ENCODE measurements at regions of chr6 and their contacts with region 1.

Region 1: GRCh38 chr6:51350308-51350904 is 531.7 kb downstream of the TFAP2B start:
- DNase-seq: no peak
- H3K4me3 Mint-ChIP-seq: no peak overlapping the region
- H3K27ac Mint-ChIP-seq: no peak overlapping the region
- H3K4me1 Mint-ChIP-seq: no peaks in the 10 kb centered on the region
- H3K27me3 Mint-ChIP-seq: peaks cover 23% of the 10 kb centered on the region
- CTCF ChIP-seq: peak; percentile 27

Region 2: GRCh38 chr6:51077821-51078518 is 272.4 kb before region 1 on chr6:
- CTCF ChIA-PET with region 1: no interaction called
- intact Hi-C with region 1: loop called (anchors 5 kb)
- DNase-seq: no peak
- H3K4me3 Mint-ChIP-seq: no peak overlapping the region
- H3K27ac Mint-ChIP-seq: no peak overlapping the region
- H3K4me1 Mint-ChIP-seq: no peaks in the 10 kb centered on the region
- H3K27me3 Mint-ChIP-seq: no peaks in the 10 kb centered on the region
- CTCF ChIP-seq: no peak

Region 3: GRCh38 chr6:51648236-51648635 is 297.8 kb after region 1 on chr6:
- CTCF ChIA-PET with region 1: no interaction called
- intact Hi-C with region 1: no loop called
- DNase-seq: no peak
- H3K4me3 Mint-ChIP-seq: no peak overlapping the region
- H3K27ac Mint-ChIP-seq: no peak overlapping the region
- H3K4me1 Mint-ChIP-seq: peaks cover 10% of the 10 kb centered on the region
- H3K27me3 Mint-ChIP-seq: no peaks in the 10 kb centered on the region
- CTCF ChIP-seq: no peak